ENCODE measurements at regions of chr1 and their contacts with region 1.

Region 1: GRCh38 chr1:36149237-36149972 is at the start of gene TRAPPC3:
- DNase-seq: peak; percentile 100
- H3K4me3 ChIP-seq: peak within 1 kb of the TSS; percentile 87 to 91 (median 87)
- H3K4me3 Mint-ChIP-seq: peak within 1 kb of the TSS; percentile 93 to 98
- H3K27ac ChIP-seq: peak within 1 kb of the TSS; percentile 100
- H3K27ac Mint-ChIP-seq: peak within 1 kb of the TSS; percentile 98 to 100 (median 99)
- H3K4me1 ChIP-seq: peaks cover 47 to 58% of the 10 kb centered on the region in 2 donors
- H3K4me1 Mint-ChIP-seq: peaks cover 59% of the 10 kb centered on the region
- H3K27me3 ChIP-seq: no peaks in the 10 kb centered on the region
- H3K27me3 Mint-ChIP-seq: peaks cover 0 to 2% (median 0%) of the 10 kb centered on the region in 3 donors
- CTCF ChIP-seq: peak; percentile 82
- polyA plus RNA-seq, gene TRAPPC3: 61.1 to 136 (median 125) TPM

Region 2: GRCh38 chr1:35747938-35748702 is 401.3 kb before region 1 on chr1:
- intact Hi-C with region 1: no loop called
- DNase-seq: no peak
- H3K4me3 ChIP-seq: no peak overlapping the region
- H3K4me3 Mint-ChIP-seq: no peak overlapping the region
- H3K27ac ChIP-seq: no peak overlapping the region
- H3K27ac Mint-ChIP-seq: peak overlapping the region in 3 of 7 donors; percentile 11 to 63 (median 38)
- H3K4me1 ChIP-seq: no peaks in the 10 kb centered on the region
- H3K4me1 Mint-ChIP-seq: peaks cover 4% of the 10 kb centered on the region
- H3K27me3 ChIP-seq: no peaks in the 10 kb centered on the region
- H3K27me3 Mint-ChIP-seq: no peaks in the 10 kb centered on the region
- CTCF ChIP-seq: no peak

Region 3: DNA sequence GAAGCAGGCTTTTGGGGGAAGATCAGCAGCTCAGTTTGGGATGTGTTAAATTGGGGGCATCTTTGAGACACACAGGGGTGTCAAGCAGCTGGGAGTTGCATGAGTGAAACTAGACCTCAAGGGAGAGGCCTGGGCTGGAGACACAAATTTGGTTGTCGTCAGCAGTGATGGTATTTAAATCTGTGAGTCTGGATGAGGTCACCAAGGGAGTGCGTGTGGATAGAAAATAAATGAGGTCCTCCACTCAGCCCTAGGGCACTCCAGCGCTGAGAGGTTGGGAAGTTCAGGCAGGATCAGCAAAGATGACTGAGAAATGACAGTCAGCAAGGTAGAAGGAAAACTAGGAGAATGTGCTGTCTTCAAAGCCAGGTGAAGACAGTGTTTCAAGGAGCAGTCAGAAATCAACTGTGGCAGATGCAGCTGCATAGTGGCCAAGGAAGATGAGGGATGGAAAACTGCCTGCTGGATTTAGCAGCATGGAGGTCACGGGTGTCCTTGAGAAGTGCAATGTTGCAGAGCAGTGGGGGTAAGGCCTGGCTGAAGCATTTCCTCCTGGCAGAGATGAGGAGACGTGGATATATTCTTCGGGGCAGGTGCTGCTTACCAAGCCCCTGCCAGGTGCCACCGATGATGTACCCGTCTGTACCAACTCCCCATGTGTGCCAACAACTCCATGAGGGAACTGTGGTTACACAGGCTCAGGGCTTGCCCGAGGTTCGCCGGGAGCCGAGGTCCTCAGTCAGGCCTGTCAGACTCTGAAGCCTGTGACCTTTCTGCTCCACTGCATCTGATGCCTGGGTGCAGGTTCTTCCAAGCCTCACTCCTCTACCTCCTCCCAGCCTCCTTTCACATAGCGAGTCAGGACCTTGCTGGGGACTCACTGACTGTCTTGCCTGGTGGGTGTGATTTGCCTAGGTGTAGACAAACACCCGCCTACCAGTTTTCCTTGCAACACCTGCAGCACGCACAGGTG is 17.8 kb after region 1 on chr1:
- intact Hi-C with region 1: no loop called
- DNase-seq: no peak
- H3K4me3 ChIP-seq: no peak overlapping the region
- H3K4me3 Mint-ChIP-seq: no peak overlapping the region
- H3K27ac ChIP-seq: peak overlapping the region in 1 of 2 donors; percentile 61
- H3K27ac Mint-ChIP-seq: peak overlapping the region; percentile 43 to 93 (median 77)
- H3K4me1 ChIP-seq: peaks cover 9 to 17% of the 10 kb centered on the region in 2 donors
- H3K4me1 Mint-ChIP-seq: peaks cover 43% of the 10 kb centered on the region
- H3K27me3 ChIP-seq: no peaks in the 10 kb centered on the region
- H3K27me3 Mint-ChIP-seq: peaks cover 0 to 5% (median 0%) of the 10 kb centered on the region in 3 donors
- CTCF ChIP-seq: no peak

Region 4: GRCh38 chr1:36178471-36179219 is 29.2 kb after region 1 on chr1:
- intact Hi-C with region 1: no loop called
- DNase-seq: no peak
- H3K4me3 ChIP-seq: no peak overlapping the region
- H3K4me3 Mint-ChIP-seq: no peak overlapping the region
- H3K27ac ChIP-seq: no peak overlapping the region
- H3K27ac Mint-ChIP-seq: peak overlapping the region in 3 of 7 donors; percentile 11 to 61 (median 54)
- H3K4me1 ChIP-seq: no peaks in the 10 kb centered on the region
- H3K4me1 Mint-ChIP-seq: no peaks in the 10 kb centered on the region
- H3K27me3 ChIP-seq: no peaks in the 10 kb centered on the region
- H3K27me3 Mint-ChIP-seq: peaks cover 0 to 4% (median 0%) of the 10 kb centered on the region in 3 donors
- CTCF ChIP-seq: no peak

Region 5: GRCh38 chr1:36223993-36224536 is 74.7 kb after region 1 on chr1 and contains the start of gene THRAP3:
- intact Hi-C with region 1: loop called (anchors 2 to 5 kb)
- DNase-seq: peak; percentile 99 to 100 (median 100)
- H3K4me3 ChIP-seq: peak within 1 kb of the TSS; percentile 86 to 88 (median 87)
- H3K4me3 Mint-ChIP-seq: peak within 1 kb of the TSS; percentile 97 to 100
- H3K27ac ChIP-seq: peak within 1 kb of the TSS; percentile 97 to 98
- H3K27ac Mint-ChIP-seq: peak within 1 kb of the TSS; percentile 99 to 100 (median 100)
- H3K4me1 ChIP-seq: peaks cover 24 to 35% of the 10 kb centered on the region in 2 donors
- H3K4me1 Mint-ChIP-seq: peaks cover 26% of the 10 kb centered on the region
- H3K27me3 ChIP-seq: no peaks in the 10 kb centered on the region
- H3K27me3 Mint-ChIP-seq: peaks cover 0 to 3% (median 2%) of the 10 kb centered on the region in 3 donors
- CTCF ChIP-seq: no peak
- polyA plus RNA-seq, gene THRAP3: 30.1 to 63.4 (median 35.7) TPM

Region 6: GRCh38 chr1:36285448-36286101 is 136.2 kb after region 1 on chr1:
- intact Hi-C with region 1: loop called in 1 of 2 experiments (anchors 2 kb)
- DNase-seq: peak; percentile 72 to 81 (median 75)
- H3K4me3 ChIP-seq: no peak overlapping the region
- H3K4me3 Mint-ChIP-seq: no peak overlapping the region
- H3K27ac ChIP-seq: peak overlapping the region in 1 of 2 donors; percentile 36
- H3K27ac Mint-ChIP-seq: peak overlapping the region in 4 of 7 donors; percentile 5 to 87 (median 52)
- H3K4me1 ChIP-seq: no peaks in the 10 kb centered on the region
- H3K4me1 Mint-ChIP-seq: peaks cover 2% of the 10 kb centered on the region
- H3K27me3 ChIP-seq: no peaks in the 10 kb centered on the region
- H3K27me3 Mint-ChIP-seq: no peaks in the 10 kb centered on the region
- CTCF ChIP-seq: peak; percentile 84

Region 7: GRCh38 chr1:36323597-36324352 is 174.4 kb after region 1 on chr1 and contains the start of gene EVA1B:
- intact Hi-C with region 1: no loop called
- DNase-seq: peak in 2 of 3 donors; percentile 37 to 42
- H3K4me3 ChIP-seq: peak within 1 kb of the TSS; percentile 45 to 82 (median 68)
- H3K4me3 Mint-ChIP-seq: peak within 1 kb of the TSS; percentile 79 to 87
- H3K27ac ChIP-seq: no peak within 1 kb of the TSS
- H3K27ac Mint-ChIP-seq: peak within 1 kb of the TSS in 5 of 7 donors; percentile 21 to 82 (median 70)
- H3K4me1 ChIP-seq: peaks cover 35 to 46% of the 10 kb centered on the region in 2 donors
- H3K4me1 Mint-ChIP-seq: peaks cover 37% of the 10 kb centered on the region
- H3K27me3 ChIP-seq: peaks cover 0 to 17% of the 10 kb centered on the region in 2 donors
- H3K27me3 Mint-ChIP-seq: peaks cover 23 to 46% (median 28%) of the 10 kb centered on the region in 3 donors
- CTCF ChIP-seq: no peak
- polyA plus RNA-seq, gene EVA1B: 13.7 to 19.1 (median 16.6) TPM

Measured in CD14-positive monocyte (primary cell).